ENCODE measurements at regions of chr5 and their contacts with region 1.

Region 1: DNA sequence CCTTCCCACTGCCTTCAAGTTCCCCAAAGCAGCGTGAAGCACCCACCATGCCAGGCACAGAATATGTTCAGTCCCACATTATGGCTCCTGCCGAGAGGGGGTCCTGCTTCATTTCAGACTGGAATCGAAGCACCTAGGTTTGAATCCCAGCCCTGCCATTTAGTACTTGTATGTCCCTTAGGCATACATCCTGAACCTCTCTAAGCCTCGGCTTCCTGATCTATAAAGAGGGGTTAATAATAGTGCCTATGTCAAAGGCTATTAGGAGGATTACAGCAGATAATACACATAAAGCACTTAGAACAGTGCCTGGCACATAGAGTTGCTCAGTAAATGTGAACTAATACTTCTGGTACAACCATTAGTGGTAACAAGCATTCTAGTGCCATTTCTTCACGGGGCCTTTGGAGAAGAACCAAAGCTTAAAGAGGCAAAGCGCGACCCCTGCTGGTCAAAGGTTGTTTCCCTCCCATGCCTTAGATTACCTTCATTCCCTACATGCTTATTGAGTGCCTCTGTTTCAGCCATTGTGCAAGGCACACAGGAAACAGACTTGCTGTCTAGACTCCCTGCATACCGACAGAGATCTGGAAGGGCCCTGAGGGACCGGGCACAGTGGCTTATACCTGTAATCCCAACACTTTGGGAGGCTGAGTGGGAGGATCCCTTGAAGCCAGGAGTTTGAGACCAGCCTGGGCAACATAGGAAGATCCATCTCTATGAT is 98.2 kb downstream of the PPARGC1B start:
- DNase-seq: peak; percentile 64 to 89 (median 78)
- ATAC-seq: peak; percentile 78
- H3K4me3 ChIP-seq: no peak overlapping the region
- H3K4me3 Mint-ChIP-seq: no peak overlapping the region
- H3K27ac ChIP-seq: no peak overlapping the region
- H3K27ac Mint-ChIP-seq: no peak overlapping the region
- H3K4me1 ChIP-seq: peaks cover 5% of the 10 kb centered on the region
- H3K4me1 Mint-ChIP-seq: no peaks in the 10 kb centered on the region
- H3K27me3 ChIP-seq: no peaks in the 10 kb centered on the region
- H3K27me3 Mint-ChIP-seq: no peaks in the 10 kb centered on the region
- CTCF ChIP-seq: peak; percentile 85

Region 2: GRCh38 chr5:149442563-149443182 is 385.6 kb before region 1 on chr5:
- CTCF ChIA-PET with region 1: no interaction called
- POLR2A ChIA-PET with region 1: no interaction called
- intact Hi-C with region 1: loop called in 1 of 2 experiments (anchors 10 kb)
- DNase-seq: peak; percentile 40 to 81 (median 64)
- ATAC-seq: peak; percentile 83
- H3K4me3 ChIP-seq: no peak overlapping the region
- H3K4me3 Mint-ChIP-seq: no peak overlapping the region
- H3K27ac ChIP-seq: no peak overlapping the region
- H3K27ac Mint-ChIP-seq: no peak overlapping the region
- H3K4me1 ChIP-seq: peaks cover 12% of the 10 kb centered on the region
- H3K4me1 Mint-ChIP-seq: peaks cover 17% of the 10 kb centered on the region
- H3K27me3 ChIP-seq: no peaks in the 10 kb centered on the region
- H3K27me3 Mint-ChIP-seq: no peaks in the 10 kb centered on the region
- CTCF ChIP-seq: peak; percentile 90

Region 3: GRCh38 chr5:149636851-149637246 is 191.5 kb before region 1 on chr5:
- CTCF ChIA-PET with region 1: interaction called, 43 read pairs
- POLR2A ChIA-PET with region 1: no interaction called
- intact Hi-C with region 1: loop called (anchors 1 kb)
- DNase-seq: peak in 8 of 14 experiments; percentile 35 to 83 (median 64)
- ATAC-seq: peak; percentile 57
- H3K4me3 ChIP-seq: no peak overlapping the region
- H3K4me3 Mint-ChIP-seq: no peak overlapping the region
- H3K27ac ChIP-seq: no peak overlapping the region
- H3K27ac Mint-ChIP-seq: no peak overlapping the region
- H3K4me1 ChIP-seq: peaks cover 2% of the 10 kb centered on the region
- H3K4me1 Mint-ChIP-seq: no peaks in the 10 kb centered on the region
- H3K27me3 ChIP-seq: no peaks in the 10 kb centered on the region
- H3K27me3 Mint-ChIP-seq: no peaks in the 10 kb centered on the region
- CTCF ChIP-seq: peak; percentile 92

Region 4: GRCh38 chr5:149667084-149667828 is 161.1 kb before region 1 on chr5:
- CTCF ChIA-PET with region 1: interaction called, 11 read pairs
- POLR2A ChIA-PET with region 1: no interaction called
- intact Hi-C with region 1: no loop called
- DNase-seq: peak in 3 of 14 experiments; percentile 21 to 55 (median 45)
- ATAC-seq: no peak
- H3K4me3 ChIP-seq: no peak overlapping the region
- H3K4me3 Mint-ChIP-seq: no peak overlapping the region
- H3K27ac ChIP-seq: no peak overlapping the region
- H3K27ac Mint-ChIP-seq: no peak overlapping the region
- H3K4me1 ChIP-seq: no peaks in the 10 kb centered on the region
- H3K4me1 Mint-ChIP-seq: no peaks in the 10 kb centered on the region
- H3K27me3 ChIP-seq: no peaks in the 10 kb centered on the region
- H3K27me3 Mint-ChIP-seq: peaks cover 11% of the 10 kb centered on the region
- CTCF ChIP-seq: peak; percentile 53

Region 5: GRCh38 chr5:149790276-149790675 is 38.0 kb before region 1 on chr5:
- CTCF ChIA-PET with region 1: no interaction called
- POLR2A ChIA-PET with region 1: no interaction called
- intact Hi-C with region 1: no loop called
- DNase-seq: no peak
- ATAC-seq: no peak
- H3K4me3 ChIP-seq: no peak overlapping the region
- H3K4me3 Mint-ChIP-seq: no peak overlapping the region
- H3K27ac ChIP-seq: no peak overlapping the region
- H3K27ac Mint-ChIP-seq: no peak overlapping the region
- H3K4me1 ChIP-seq: no peaks in the 10 kb centered on the region
- H3K4me1 Mint-ChIP-seq: no peaks in the 10 kb centered on the region
- H3K27me3 ChIP-seq: no peaks in the 10 kb centered on the region
- H3K27me3 Mint-ChIP-seq: no peaks in the 10 kb centered on the region
- CTCF ChIP-seq: no peak